ENCODE measurements at regions of chr1 and their contacts with region 1.

Region 1: GRCh38 chr1:182143154-182143657 is 81.7 kb upstream of the ZNF648 start:
- DNase-seq: peak; percentile 95
- ATAC-seq: peak; percentile 82
- H3K4me3 Mint-ChIP-seq: no peak overlapping the region
- H3K27ac Mint-ChIP-seq: no peak overlapping the region
- H3K4me1 Mint-ChIP-seq: peaks cover 19% of the 10 kb centered on the region
- H3K27me3 Mint-ChIP-seq: no peaks in the 10 kb centered on the region
- CTCF ChIP-seq: peak; percentile 95

Region 2: GRCh38 chr1:182159443-182159842 is 16.2 kb after region 1 on chr1:
- CTCF ChIA-PET with region 1: interaction called, 14 read pairs
- POLR2A ChIA-PET with region 1: no interaction called
- DNase-seq: no peak
- ATAC-seq: no peak
- H3K4me3 Mint-ChIP-seq: no peak overlapping the region
- H3K27ac Mint-ChIP-seq: no peak overlapping the region
- H3K4me1 Mint-ChIP-seq: peaks cover 3% of the 10 kb centered on the region
- H3K27me3 Mint-ChIP-seq: no peaks in the 10 kb centered on the region
- CTCF ChIP-seq: no peak

Region 3: GRCh38 chr1:182198049-182198501 is 54.9 kb after region 1 on chr1:
- CTCF ChIA-PET with region 1: interaction called, 64 read pairs
- POLR2A ChIA-PET with region 1: no interaction called
- DNase-seq: no peak
- ATAC-seq: peak; percentile 67
- H3K4me3 Mint-ChIP-seq: no peak overlapping the region
- H3K27ac Mint-ChIP-seq: no peak overlapping the region
- H3K4me1 Mint-ChIP-seq: no peaks in the 10 kb centered on the region; the same call in none of the 2 replicates
- H3K27me3 Mint-ChIP-seq: no peaks in the 10 kb centered on the region
- CTCF ChIP-seq: peak; percentile 27; the same call in 1 of the 2 replicates

Region 4: GRCh38 chr1:182363636-182364035 is 220.4 kb after region 1 on chr1:
- CTCF ChIA-PET with region 1: interaction called, 11 read pairs
- POLR2A ChIA-PET with region 1: no interaction called
- DNase-seq: no peak
- ATAC-seq: no peak
- H3K4me3 Mint-ChIP-seq: no peak overlapping the region
- H3K27ac Mint-ChIP-seq: no peak overlapping the region
- H3K4me1 Mint-ChIP-seq: peaks cover 32% of the 10 kb centered on the region
- H3K27me3 Mint-ChIP-seq: no peaks in the 10 kb centered on the region
- CTCF ChIP-seq: no peak

Region 5: GRCh38 chr1:182404781-182405180 is 261.6 kb after region 1 on chr1:
- CTCF ChIA-PET with region 1: interaction called, 12 read pairs
- POLR2A ChIA-PET with region 1: no interaction called
- DNase-seq: no peak
- ATAC-seq: peak; percentile 87
- H3K4me3 Mint-ChIP-seq: no peak overlapping the region
- H3K27ac Mint-ChIP-seq: no peak overlapping the region
- H3K4me1 Mint-ChIP-seq: peaks cover 6% of the 10 kb centered on the region; the same call in 1 of the 2 replicates
- H3K27me3 Mint-ChIP-seq: no peaks in the 10 kb centered on the region
- CTCF ChIP-seq: no peak

Measured in WTC11 (cell line).